Gastrocnemius medialis (tissue), 4 donors: ENCODE measurements at regions of chr15 and their contacts with region 1.

Region 1: DNA sequence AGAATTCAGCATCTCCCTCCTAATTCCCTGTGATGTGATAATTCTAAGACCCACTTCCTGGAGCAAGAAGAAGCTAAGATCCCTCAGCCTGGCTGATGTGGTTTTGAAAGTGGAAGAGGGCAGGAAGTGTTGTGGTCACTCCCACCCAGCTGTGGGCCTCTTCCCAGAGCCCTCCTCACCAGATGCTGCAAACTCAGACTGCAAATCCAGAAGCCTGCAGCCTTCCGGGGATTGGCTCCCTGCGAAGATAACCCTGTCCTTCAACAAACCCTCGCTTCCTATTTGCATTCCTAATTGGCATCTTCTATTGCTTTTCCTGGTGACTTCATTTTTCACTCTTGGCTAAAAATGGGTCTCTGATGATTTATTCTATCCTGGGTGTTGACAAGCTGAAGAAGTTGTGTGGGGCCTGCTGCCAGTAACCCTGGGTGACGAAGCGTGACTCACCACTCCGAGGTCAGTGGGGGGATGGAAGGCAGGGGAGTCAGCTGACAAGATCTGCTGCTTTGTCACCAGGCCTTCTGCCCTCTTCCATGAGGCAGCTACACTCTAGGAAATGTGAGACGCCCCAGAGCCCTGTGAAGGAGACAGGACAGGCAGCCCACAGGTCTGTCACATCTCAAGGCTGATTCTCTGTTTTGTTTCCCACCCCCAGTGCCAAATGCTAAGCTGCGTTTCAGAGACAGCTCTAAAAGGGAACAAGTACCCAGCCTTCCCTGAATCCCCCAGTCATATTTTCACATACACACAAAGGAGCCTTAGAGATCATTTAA is 99.7 kb upstream of the LIPC start:
- DNase-seq: peak; percentile 98
- ATAC-seq: peak; percentile 87 to 88
- H3K4me3 ChIP-seq: peak overlapping the region in 1 of 4 donors; percentile 3
- H3K27ac ChIP-seq: peak overlapping the region; percentile 90 to 97 (median 92)
- H3K4me1 ChIP-seq: peaks cover 44% of the 10 kb centered on the region in 2 donors
- H3K27me3 ChIP-seq: no peaks in the 10 kb centered on the region
- CTCF ChIP-seq: peak in 1 of 5 experiments; percentile 19
- POLR2A ChIP-seq: peak; percentile 60 to 75

Region 2: GRCh38 chr15:58247855-58248766 is 84.0 kb before region 1 on chr15:
- in situ Hi-C with region 1: loop called in 2 of 4 experiments (anchors 25 kb)
- intact Hi-C with region 1: loop called (anchors 5 kb)
- DNase-seq: peak; percentile 96 to 97
- ATAC-seq: peak; percentile 90 to 97
- H3K4me3 ChIP-seq: peak overlapping the region in 1 of 4 donors; percentile 11
- H3K27ac ChIP-seq: peak overlapping the region; percentile 88 to 97 (median 91)
- H3K4me1 ChIP-seq: peaks cover 43% of the 10 kb centered on the region in 2 donors
- H3K27me3 ChIP-seq: no peaks in the 10 kb centered on the region
- CTCF ChIP-seq: no peak
- POLR2A ChIP-seq: peak; percentile 54 to 68

Region 3: GRCh38 chr15:58269455-58270414 is 62.4 kb before region 1 on chr15:
- in situ Hi-C with region 1: loop called in 1 of 4 experiments (anchors 10 kb)
- intact Hi-C with region 1: no loop called
- DNase-seq: peak in 1 of 2 donors; percentile 20
- ATAC-seq: peak; percentile 87 to 89
- H3K4me3 ChIP-seq: no peak overlapping the region
- H3K27ac ChIP-seq: no peak overlapping the region
- H3K4me1 ChIP-seq: no peaks in the 10 kb centered on the region
- H3K27me3 ChIP-seq: no peaks in the 10 kb centered on the region
- CTCF ChIP-seq: peak; percentile 40 to 77 (median 63)
- POLR2A ChIP-seq: no peak

Region 4: DNA sequence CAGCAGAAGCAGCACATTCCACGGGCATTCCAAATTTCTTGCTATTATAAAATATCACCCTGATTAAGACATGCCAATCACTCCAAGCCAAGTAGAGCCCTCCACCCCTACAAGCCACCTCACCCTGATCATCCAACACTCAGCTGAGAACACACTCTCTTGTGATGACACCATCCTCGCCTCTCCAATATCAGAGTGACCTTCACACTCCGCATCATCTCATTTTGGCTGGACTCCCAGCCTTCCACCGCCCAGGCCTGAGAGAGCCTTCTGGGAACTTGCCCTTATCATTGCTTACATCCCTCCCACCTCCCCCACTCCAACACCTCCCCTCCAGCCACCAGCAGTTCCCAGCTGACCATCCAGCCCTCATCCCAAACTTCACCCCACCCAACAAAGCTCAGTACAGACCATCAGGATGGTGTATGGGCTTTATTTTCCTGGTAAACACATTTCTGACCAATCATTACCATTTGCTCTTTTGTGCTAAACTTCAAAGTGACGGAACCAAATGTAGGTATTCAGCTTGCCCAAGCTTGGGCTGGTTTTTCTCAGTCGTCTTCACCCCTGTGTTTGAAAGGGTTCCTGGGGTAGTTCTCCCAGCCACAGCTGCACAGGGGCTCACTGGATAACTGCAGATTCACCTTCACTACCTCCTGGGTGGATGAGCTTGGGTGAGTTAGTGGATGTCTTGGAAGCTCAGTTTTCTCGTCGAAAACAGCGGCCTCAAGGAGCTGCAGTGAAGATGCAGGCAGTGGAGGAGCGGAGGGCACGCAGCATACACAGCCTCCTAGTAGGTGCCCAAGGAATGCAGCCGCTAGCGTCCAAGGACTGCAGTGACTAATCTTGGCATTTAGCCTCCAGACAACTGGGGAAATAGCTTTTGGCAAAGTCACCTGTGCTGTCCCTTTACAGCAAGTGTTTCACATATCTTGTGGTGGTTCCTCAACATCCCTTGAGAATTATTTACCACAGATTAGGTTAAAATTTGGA is 214.8 kb after region 1 on chr15:
- in situ Hi-C with region 1: no loop called
- intact Hi-C with region 1: loop called (anchors 2 kb)
- DNase-seq: peak; percentile 73 to 85
- ATAC-seq: peak; percentile 96 to 97
- H3K4me3 ChIP-seq: no peak overlapping the region
- H3K27ac ChIP-seq: peak overlapping the region; percentile 47 to 67 (median 52)
- H3K4me1 ChIP-seq: peaks cover 22 to 36% of the 10 kb centered on the region in 2 donors
- H3K27me3 ChIP-seq: no peaks in the 10 kb centered on the region
- CTCF ChIP-seq: no peak
- POLR2A ChIP-seq: no peak

Region 5: GRCh38 chr15:58770857-58771620 is 438.9 kb after region 1 on chr15 and contains the start of gene MINDY2:
- in situ Hi-C with region 1: no loop called
- intact Hi-C with region 1: loop called (anchors 1 kb)
- DNase-seq: peak; percentile 97 to 98
- ATAC-seq: peak; percentile 91 to 92
- H3K4me3 ChIP-seq: peak within 1 kb of the TSS; percentile 70 to 97 (median 92)
- H3K27ac ChIP-seq: peak within 1 kb of the TSS; percentile 92 to 99 (median 98)
- H3K4me1 ChIP-seq: peaks cover 40 to 44% of the 10 kb centered on the region in 2 donors
- H3K27me3 ChIP-seq: no peaks in the 10 kb centered on the region
- CTCF ChIP-seq: peak in 1 of 5 experiments; percentile 19
- POLR2A ChIP-seq: peak; percentile 87 to 96
- total RNA-seq, gene MINDY2: 7.1 to 22.0 (median 9.8) TPM